Psoas muscle (tissue), 8 donors: ENCODE measurements at regions of chr7 and their contacts with region 1.

Region 1: GRCh38 chr7:71237945-71238344 is 106.0 kb downstream of the GALNT17 start:
- DNase-seq: no peak
- ATAC-seq: peak; percentile 58 to 75 (median 74)
- H3K4me3 ChIP-seq: no peak overlapping the region
- H3K27ac ChIP-seq: peak overlapping the region; percentile 76
- H3K4me1 ChIP-seq: peaks cover 17% of the 10 kb centered on the region
- H3K27me3 ChIP-seq: no peaks in the 10 kb centered on the region
- CTCF ChIP-seq: peak; percentile 20

Region 2: DNA sequence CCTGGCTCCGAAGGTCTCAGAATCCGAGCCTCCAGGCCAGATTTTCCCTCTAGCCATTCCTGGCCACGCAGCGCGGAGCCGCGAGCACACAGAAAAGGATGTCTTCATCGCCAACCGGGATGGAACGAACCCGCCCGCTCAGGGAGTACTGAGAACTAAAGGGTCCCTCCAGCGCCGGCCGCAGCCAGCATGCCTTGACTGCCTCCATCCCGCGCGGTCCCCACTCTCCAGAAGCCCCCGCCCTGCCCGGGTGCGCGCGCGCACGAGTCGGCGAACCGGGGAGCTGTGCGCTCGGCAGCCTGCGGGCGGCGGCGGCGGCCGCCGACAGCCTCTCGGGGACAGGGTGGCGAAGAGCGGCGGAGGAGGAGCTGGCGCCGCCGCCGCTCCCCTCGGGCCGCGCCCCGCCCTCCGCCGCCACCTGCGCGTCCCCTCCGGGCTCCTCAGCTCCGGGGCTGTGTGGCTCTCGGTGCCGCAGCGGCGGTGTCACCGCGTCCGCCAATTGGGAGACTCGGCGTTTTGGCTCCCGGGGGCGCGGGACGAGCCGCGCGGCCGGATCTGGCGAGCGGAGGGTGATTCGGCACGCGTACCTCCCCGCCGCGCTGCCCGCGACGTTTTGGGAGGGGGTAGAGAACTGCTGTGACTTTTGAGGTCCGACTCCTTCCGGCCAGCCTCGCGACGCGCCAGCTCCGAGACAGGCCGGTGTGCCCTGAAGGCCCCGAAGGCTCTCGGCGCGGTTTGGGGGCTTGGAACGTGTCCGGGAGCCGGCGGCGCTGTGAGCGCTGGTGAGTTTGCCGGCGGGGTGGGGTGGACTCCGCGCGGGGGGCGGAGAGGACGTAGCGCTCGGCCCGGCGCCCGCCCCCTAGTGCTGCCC is 106.5 kb before region 1 on chr7:
- intact Hi-C with region 1: loop called in 1 of 2 experiments (anchors 10 kb)
- DNase-seq: peak in 1 of 2 donors; percentile 46
- ATAC-seq: peak; percentile 71 to 87 (median 81)
- H3K4me3 ChIP-seq: peak overlapping the region; percentile 68
- H3K27ac ChIP-seq: peak overlapping the region; percentile 36
- H3K4me1 ChIP-seq: peaks cover 3% of the 10 kb centered on the region
- H3K27me3 ChIP-seq: peaks cover 0 to 57% (median 0%) of the 10 kb centered on the region in 3 donors
- CTCF ChIP-seq: peak; percentile 22

Region 3: GRCh38 chr7:71308096-71308495 is 70.2 kb after region 1 on chr7:
- intact Hi-C with region 1: loop called in 1 of 2 experiments (anchors 5 kb)
- DNase-seq: peak in 1 of 2 donors; percentile 15
- ATAC-seq: peak; percentile 85 to 96 (median 92)
- H3K4me3 ChIP-seq: no peak overlapping the region
- H3K27ac ChIP-seq: peak overlapping the region; percentile 41
- H3K4me1 ChIP-seq: no peaks in the 10 kb centered on the region
- H3K27me3 ChIP-seq: no peaks in the 10 kb centered on the region
- CTCF ChIP-seq: no peak

Region 4: DNA sequence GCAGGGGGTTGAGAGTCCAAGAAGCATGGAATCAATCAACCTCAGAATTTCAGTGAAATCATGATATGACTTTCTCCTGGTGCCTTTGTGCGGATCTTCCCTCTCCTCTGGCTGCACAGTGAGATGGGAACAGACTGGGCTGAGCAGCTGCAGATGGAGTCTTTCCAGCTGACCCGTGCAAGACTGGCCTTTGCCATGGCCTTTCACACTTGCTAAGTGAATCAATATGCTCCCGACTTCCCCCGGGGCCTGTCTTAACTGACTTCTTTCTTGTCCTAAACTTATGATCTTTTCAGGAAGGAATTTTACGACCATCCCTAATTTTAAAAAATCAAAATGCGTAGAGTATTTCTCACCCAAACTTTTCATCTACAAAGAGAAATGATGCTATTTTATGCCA is 363.9 kb after region 1 on chr7:
- intact Hi-C with region 1: loop called in 1 of 2 experiments (anchors 10 kb)
- DNase-seq: no peak
- ATAC-seq: no peak
- H3K4me3 ChIP-seq: no peak overlapping the region
- H3K27ac ChIP-seq: no peak overlapping the region
- H3K4me1 ChIP-seq: no peaks in the 10 kb centered on the region
- H3K27me3 ChIP-seq: no peaks in the 10 kb centered on the region
- CTCF ChIP-seq: no peak